ENCODE measurements at regions of chr2 and their contacts with region 1.

Region 1: GRCh38 chr2:64311948-64312621 is 141.9 kb upstream of the LGALSL start:
- ATAC-seq: peak; percentile 50 to 96 (median 88)
- H3K4me3 ChIP-seq: no peak overlapping the region
- H3K27ac ChIP-seq: no peak overlapping the region
- H3K4me1 ChIP-seq: peaks cover 0 to 3% of the 10 kb centered on the region in 2 donors

Region 2: GRCh38 chr2:64036034-64036705 is 275.9 kb before region 1 on chr2:
- in situ Hi-C with region 1: loop called in 1 of 9 experiments (anchors 10 kb)
- ATAC-seq: peak in 2 of 8 experiments; percentile 71 to 92
- H3K4me3 ChIP-seq: no peak overlapping the region
- H3K27ac ChIP-seq: no peak overlapping the region
- H3K4me1 ChIP-seq: no peaks in the 10 kb centered on the region

Region 3: DNA sequence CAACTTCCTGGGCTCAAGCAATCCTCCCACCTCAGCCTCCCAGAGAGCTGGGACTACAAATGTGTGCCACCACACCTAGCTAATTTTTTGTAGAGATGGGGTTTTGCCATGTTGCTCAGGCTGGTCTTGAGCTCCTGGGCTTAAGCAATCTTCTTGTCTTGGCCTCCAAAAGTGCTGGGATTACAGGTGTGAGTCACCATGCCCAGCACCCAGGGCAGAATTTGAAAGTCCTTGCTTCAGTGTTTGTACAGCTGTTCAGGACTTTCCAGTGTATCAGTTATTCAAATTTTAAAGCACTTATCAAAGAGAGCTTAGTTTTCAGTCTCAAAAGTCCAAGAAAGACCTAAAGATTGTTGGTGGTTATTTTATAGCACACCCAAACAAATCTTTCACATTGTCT is 249.3 kb before region 1 on chr2:
- in situ Hi-C with region 1: loop called in 2 of 9 experiments (anchors 25 kb)
- ATAC-seq: no peak
- H3K4me3 ChIP-seq: no peak overlapping the region
- H3K27ac ChIP-seq: no peak overlapping the region
- H3K4me1 ChIP-seq: peaks cover 12% of the 10 kb centered on the region in 2 donors